Left colon (tissue), 2 donors: ENCODE measurements at regions of chr18 and their contacts with region 1.

Region 1: DNA sequence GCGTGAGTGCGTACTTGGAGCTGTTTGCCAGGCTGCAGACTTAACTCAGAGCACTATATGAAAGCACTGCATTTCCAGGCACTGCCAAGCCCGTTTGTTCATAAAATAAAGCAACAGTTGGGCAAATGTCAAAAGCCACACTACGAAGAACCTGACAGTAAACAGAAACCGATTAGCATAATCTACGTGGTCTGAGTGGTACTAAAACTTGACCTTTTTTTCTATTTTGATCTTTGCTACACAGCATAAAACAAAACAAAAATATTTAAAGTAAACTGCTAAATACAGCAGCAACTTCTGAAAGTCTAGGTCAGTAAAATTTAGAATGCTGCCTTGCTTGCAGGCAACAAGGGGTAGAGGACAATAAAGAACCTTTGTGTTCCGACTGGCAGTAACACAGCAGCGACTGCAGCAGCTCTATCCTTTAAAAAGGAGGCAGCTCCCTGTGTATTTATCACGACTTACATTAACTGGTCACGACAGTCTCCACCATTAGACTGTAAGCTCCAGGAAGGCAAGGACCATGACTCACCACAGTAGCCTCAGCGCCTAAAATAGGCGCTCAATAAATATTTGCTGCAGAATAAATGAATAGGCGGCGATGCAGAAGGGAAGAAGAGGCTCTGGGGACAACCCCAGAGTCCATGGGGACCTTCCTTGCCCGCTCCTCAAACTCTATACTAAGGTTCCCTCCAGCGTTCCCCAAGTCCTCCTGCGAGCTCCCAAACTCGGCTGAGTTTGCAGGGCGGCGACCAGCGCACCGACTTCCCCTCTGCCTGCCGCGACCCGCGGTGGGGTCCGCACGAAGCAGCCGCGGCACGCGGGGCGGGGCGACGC is 902 bp downstream of the SS18 start:
- DNase-seq: peak in 1 of 2 donors; percentile 7
- ATAC-seq: peak; percentile 0

Region 2: DNA sequence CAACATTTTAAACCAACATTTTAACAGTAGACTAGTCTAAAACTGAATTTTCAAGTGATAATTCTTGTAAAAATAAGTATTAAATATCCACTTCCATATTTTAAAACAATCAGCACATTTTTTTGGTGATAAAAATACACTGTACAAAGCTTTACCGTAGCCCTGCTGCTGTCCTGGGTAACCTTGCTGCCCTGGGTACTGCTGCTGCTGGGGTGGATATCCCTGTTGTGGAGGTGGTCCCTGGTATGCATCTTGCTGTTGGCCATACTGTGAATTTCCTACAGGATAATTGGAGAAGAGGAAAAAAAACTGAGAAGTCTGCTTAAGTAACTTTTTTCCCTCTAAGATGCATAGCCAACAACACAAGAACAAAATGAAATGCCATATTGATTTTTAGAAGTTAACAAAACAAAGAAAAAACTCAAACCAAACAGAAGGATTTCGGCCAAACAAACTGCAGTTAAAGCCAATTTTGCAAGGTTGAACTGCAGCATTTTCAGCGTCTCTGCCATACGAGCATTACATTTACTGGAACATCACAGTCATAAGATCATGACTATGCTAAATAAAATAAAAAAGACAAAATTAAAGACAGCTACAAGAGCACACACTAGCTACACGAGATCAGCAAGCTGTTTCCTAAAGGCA is 54.5 kb before region 1 on chr18:
- intact Hi-C with region 1: loop called in 1 of 2 experiments (anchors 10 kb)
- DNase-seq: no peak
- ATAC-seq: no peak

Region 3: GRCh38 chr18:26133652-26134051 is 44.1 kb after region 1 on chr18 and contains the start of gene PSMA8:
- intact Hi-C with region 1: no loop called
- DNase-seq: peak in 1 of 2 donors; percentile 17
- ATAC-seq: no peak
- total RNA-seq, gene PSMA8: not detected

Region 4: GRCh38 chr18:26159353-26159752 is 69.8 kb after region 1 on chr18:
- intact Hi-C with region 1: no loop called
- DNase-seq: no peak
- ATAC-seq: no peak